ENCODE measurements at regions of chr2 and their contacts with region 1.

Region 1: GRCh38 chr2:218733171-218734021 is 22.8 kb downstream of the TTLL4 start:
- DNase-seq: peak; percentile 84
- ATAC-seq: peak; percentile 35
- H3K4me3 ChIP-seq: peak overlapping the region in 1 of 3 experiments; percentile 0; a peak in 1 of 6 replicates
- H3K27ac ChIP-seq: peak overlapping the region; percentile 76
- H3K4me1 ChIP-seq: peaks cover 47% of the 10 kb centered on the region
- H3K27me3 ChIP-seq: no peaks in the 10 kb centered on the region
- CTCF ChIP-seq: peak; percentile 23; the same call in 1 of the 2 replicates
- EP300 ChIP-seq: peak in 1 of 2 experiments; percentile 93; a peak in 2 of 4 replicates
- POLR2A ChIP-seq: no peak
- RAD21 ChIP-seq: no peak

Region 2: DNA sequence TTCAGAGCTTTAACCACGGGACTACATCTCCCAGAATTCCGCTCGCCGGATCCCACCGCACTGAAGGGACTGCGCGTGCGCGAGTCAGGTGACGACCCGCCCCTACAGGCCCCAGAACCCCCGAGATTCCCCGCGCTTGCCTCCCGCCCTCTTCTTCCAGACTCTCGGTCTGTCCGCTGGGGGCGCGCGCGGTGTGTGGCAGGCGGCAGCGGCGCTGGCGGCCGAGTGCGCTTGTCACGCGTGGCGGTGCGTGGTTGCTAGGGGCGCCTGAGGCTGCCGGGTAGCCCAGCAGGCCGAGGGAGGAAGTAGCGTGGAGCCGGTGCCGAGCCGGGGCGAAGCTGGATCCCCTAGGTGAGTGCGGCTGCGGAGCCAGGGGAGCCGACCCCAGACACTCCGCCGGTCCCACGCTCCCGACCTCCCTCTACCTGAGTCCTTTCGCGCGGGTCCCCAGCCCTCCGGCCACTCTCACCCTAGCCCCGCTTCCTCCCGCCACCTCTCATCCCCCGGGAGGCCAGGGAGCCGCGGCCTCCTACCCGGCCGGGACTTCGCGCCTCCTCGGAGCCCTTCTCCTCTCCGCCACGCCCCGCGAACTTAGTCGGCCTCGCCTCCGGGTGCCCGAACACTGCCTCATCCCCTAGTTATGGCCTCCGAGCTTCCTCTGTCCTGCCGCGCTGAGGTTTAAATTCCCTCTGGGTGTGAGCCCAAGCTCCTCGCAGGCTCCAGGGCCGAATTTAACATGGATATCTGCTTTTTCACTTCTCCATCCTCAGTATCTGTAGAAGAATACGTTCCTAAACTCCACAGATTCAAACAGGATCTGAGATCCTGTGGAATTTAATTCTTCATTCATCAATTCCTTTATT is 22.5 kb before region 1 on chr2 and contains the start of gene TTLL4:
- CTCF ChIA-PET with region 1: no interaction called
- POLR2A ChIA-PET with region 1: interaction called, 21 read pairs
- in situ Hi-C with region 1: no loop called
- intact Hi-C with region 1: no loop called
- DNase-seq: peak; percentile 95
- ATAC-seq: peak; percentile 95
- H3K4me3 ChIP-seq: peak within 1 kb of the TSS; percentile 88 to 97 (median 93)
- H3K27ac ChIP-seq: peak within 1 kb of the TSS; percentile 74
- H3K4me1 ChIP-seq: peaks cover 42% of the 10 kb centered on the region
- H3K27me3 ChIP-seq: no peaks in the 10 kb centered on the region; a peak in 1 of 5 replicates
- CTCF ChIP-seq: peak; percentile 98
- EP300 ChIP-seq: peak in 1 of 2 experiments; percentile 29; a peak in 1 of 4 replicates
- POLR2A ChIP-seq: peak; percentile 79 to 94
- RAD21 ChIP-seq: peak; percentile 84
- total RNA-seq, gene TTLL4: 77.5 and 78.0 TPM in 2 replicates

Region 3: GRCh38 chr2:218745559-218746469 is 12.4 kb after region 1 on chr2:
- CTCF ChIA-PET with region 1: interaction called, 10 read pairs
- POLR2A ChIA-PET with region 1: interaction called, 104 read pairs
- in situ Hi-C with region 1: no loop called
- intact Hi-C with region 1: loop called (anchors 1 kb)
- DNase-seq: peak; percentile 99
- ATAC-seq: peak; percentile 98
- H3K4me3 ChIP-seq: peak overlapping the region in 1 of 3 experiments; percentile 12; a peak in 2 of 6 replicates
- H3K27ac ChIP-seq: peak overlapping the region; percentile 95
- H3K4me1 ChIP-seq: peaks cover 67% of the 10 kb centered on the region
- H3K27me3 ChIP-seq: no peaks in the 10 kb centered on the region
- CTCF ChIP-seq: 0 out of 2 replicates have a peak, but pooled peaks have one; percentile 9
- EP300 ChIP-seq: peak; percentile 25 to 82; a peak in 3 of 4 replicates
- POLR2A ChIP-seq: peak in 1 of 2 experiments; percentile 47; a peak in 2 of 4 replicates
- RAD21 ChIP-seq: no peak; the same call in 1 of the 2 replicates

Region 4: GRCh38 chr2:218754201-218754600 is 20.8 kb after region 1 on chr2:
- CTCF ChIA-PET with region 1: interaction called, 10 read pairs
- POLR2A ChIA-PET with region 1: interaction called, 105 read pairs
- in situ Hi-C with region 1: no loop called
- intact Hi-C with region 1: loop called (anchors 1 kb)
- DNase-seq: no peak
- ATAC-seq: no peak
- H3K4me3 ChIP-seq: no peak overlapping the region
- H3K27ac ChIP-seq: peak overlapping the region; percentile 96
- H3K4me1 ChIP-seq: peaks cover 95% of the 10 kb centered on the region
- H3K27me3 ChIP-seq: no peaks in the 10 kb centered on the region
- CTCF ChIP-seq: no peak
- EP300 ChIP-seq: no peak
- POLR2A ChIP-seq: no peak
- RAD21 ChIP-seq: no peak

Region 5: DNA sequence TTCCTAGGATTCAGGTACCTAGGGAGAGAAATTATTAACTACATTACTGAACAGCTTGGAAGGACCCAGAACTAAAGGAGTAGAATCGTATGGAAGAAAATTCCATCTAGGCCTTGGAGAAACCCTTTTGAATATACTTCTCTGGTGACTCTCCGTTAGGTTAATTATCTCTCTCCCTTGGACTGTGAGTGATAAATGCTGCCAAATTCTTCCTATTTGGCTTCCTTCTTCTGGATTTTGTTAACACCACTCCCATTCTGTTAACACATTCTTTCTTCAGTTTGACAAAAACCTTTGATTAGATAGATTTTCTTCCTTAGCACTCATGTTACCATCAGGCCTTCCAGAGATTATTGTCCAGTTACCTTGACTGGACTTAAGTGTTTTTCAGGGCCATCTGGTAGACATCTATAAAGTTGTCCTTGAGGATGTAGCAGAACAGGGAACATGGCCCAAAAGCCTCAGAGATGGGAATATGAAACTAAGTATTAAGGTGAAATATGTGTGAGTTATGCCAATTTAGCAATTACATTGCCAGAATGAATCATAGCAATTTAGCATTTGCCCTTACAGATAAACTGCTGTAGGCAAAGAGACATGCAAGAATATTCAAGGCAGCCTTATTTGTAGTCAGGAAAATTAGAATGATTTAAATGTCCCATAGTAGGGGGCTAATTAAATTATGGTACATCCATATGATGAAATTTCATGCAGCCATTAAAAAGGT is 55.3 kb after region 1 on chr2:
- CTCF ChIA-PET with region 1: no interaction called
- POLR2A ChIA-PET with region 1: interaction called, 12 read pairs
- in situ Hi-C with region 1: no loop called
- intact Hi-C with region 1: loop called (anchors 1 kb)
- DNase-seq: no peak
- ATAC-seq: no peak
- H3K4me3 ChIP-seq: no peak overlapping the region
- H3K27ac ChIP-seq: no peak overlapping the region
- H3K4me1 ChIP-seq: peaks cover 78% of the 10 kb centered on the region
- H3K27me3 ChIP-seq: no peaks in the 10 kb centered on the region
- CTCF ChIP-seq: no peak
- EP300 ChIP-seq: no peak
- POLR2A ChIP-seq: no peak
- RAD21 ChIP-seq: no peak

Region 6: DNA sequence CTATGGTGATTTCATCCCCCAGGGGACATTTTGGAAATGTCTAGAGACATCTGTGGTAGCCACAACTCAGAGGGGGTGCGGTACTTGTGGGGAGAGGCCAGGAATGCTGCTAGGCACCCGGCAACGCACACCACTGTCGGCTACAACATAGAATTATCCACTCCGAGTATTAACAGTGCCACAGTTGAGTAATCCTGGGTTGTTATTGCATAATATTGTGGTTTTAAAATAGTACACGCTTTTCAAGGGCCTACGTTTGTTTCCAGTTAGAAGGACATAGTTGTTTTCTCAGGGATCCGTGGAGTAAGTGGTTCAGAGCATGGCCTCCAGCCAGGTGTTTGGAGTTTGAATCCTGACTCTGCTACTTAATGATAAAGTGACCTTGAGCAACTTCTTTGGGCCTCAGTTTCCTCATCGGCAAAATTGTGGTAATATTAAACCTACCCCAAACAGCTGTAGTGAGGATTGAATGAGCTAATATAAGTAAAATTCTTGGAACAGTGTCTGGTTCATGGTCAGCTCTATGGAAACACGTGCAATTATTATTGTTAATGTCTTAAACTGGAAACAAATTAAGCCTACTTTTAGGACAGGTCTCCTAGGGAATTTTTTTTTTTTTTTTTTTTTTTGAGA is 73.1 kb after region 1 on chr2:
- CTCF ChIA-PET with region 1: interaction called, 3 read pairs
- POLR2A ChIA-PET with region 1: no interaction called
- in situ Hi-C with region 1: no loop called
- intact Hi-C with region 1: loop called (anchors 5 kb)
- DNase-seq: peak; percentile 91
- ATAC-seq: peak; percentile 81
- H3K4me3 ChIP-seq: peak overlapping the region in 2 of 3 experiments; percentile 38 to 40; a peak in 4 of 6 replicates
- H3K27ac ChIP-seq: peak overlapping the region; percentile 54
- H3K4me1 ChIP-seq: peaks cover 32% of the 10 kb centered on the region
- H3K27me3 ChIP-seq: no peaks in the 10 kb centered on the region
- CTCF ChIP-seq: no peak
- EP300 ChIP-seq: peak; percentile 86 to 98
- POLR2A ChIP-seq: no peak
- RAD21 ChIP-seq: no peak

Region 7: DNA sequence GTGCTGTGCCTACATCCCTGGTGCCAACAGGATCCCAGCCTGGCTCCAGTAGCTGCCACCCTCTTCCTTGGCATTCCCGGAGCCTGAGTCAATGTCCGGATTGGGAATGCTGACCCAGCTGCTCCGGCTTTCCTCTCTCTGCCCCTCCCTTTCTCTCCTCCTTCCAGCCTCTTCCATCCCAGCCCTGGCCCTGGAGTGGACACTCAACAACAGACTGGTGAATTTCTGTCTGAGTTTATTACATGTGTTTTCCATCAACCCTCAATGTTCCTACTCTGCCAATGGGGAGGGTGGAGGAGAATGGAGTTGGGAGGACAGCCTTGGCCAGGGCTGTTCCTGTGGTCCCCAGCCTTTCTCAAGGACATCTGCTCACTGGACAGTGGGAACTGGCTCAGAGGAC is 99.1 kb after region 1 on chr2:
- CTCF ChIA-PET with region 1: no interaction called
- POLR2A ChIA-PET with region 1: interaction called, 3 read pairs
- in situ Hi-C with region 1: loop called (anchors 25 kb)
- intact Hi-C with region 1: no loop called
- DNase-seq: no peak
- ATAC-seq: no peak
- H3K4me3 ChIP-seq: no peak overlapping the region
- H3K27ac ChIP-seq: no peak overlapping the region
- H3K4me1 ChIP-seq: peaks cover 39% of the 10 kb centered on the region
- H3K27me3 ChIP-seq: peaks cover 16 to 79% of the 10 kb centered on the region in 2 experiments; a peak in 4 of 5 replicates
- CTCF ChIP-seq: no peak
- EP300 ChIP-seq: no peak
- POLR2A ChIP-seq: no peak
- RAD21 ChIP-seq: no peak

Measured in HepG2 (cell line).